A549 (cell line): ENCODE measurements at regions of chr10 and their contacts with region 1.

Region 1: GRCh38 chr10:129971381-129972144 is 7.5 kb upstream of the EBF3 start:
- DNase-seq: peak; percentile 63
- ATAC-seq: peak; percentile 89 to 93
- H3K4me3 ChIP-seq: peak overlapping the region; percentile 50
- H3K27ac ChIP-seq: peak overlapping the region in 1 of 2 experiments; percentile 68; a peak in 3 of 6 replicates
- H3K4me1 ChIP-seq: peaks cover 6% of the 10 kb centered on the region; the same call in 1 of the 3 replicates
- CTCF ChIP-seq: peak; percentile 92
- EP300 ChIP-seq: no peak
- POLR2A ChIP-seq: no peak
- RAD21 ChIP-seq: peak; percentile 58 to 94

Region 2: GRCh38 chr10:129030996-129031843 is 940.3 kb before region 1 on chr10:
- CTCF ChIA-PET with region 1: interaction called, 24 read pairs
- POLR2A ChIA-PET with region 1: no interaction called
- DNase-seq: peak; percentile 28 to 58
- ATAC-seq: peak; percentile 98 to 99
- H3K4me3 ChIP-seq: no peak overlapping the region
- H3K27ac ChIP-seq: no peak overlapping the region
- H3K4me1 ChIP-seq: no peaks in the 10 kb centered on the region
- CTCF ChIP-seq: peak; percentile 61
- EP300 ChIP-seq: no peak
- POLR2A ChIP-seq: no peak
- RAD21 ChIP-seq: peak; percentile 74 to 85

Region 3: GRCh38 chr10:129958148-129958628 is 13.4 kb before region 1 on chr10:
- CTCF ChIA-PET with region 1: interaction called, 12 read pairs
- POLR2A ChIA-PET with region 1: no interaction called
- DNase-seq: no peak
- ATAC-seq: no peak
- H3K4me3 ChIP-seq: no peak overlapping the region
- H3K27ac ChIP-seq: no peak overlapping the region
- H3K4me1 ChIP-seq: peaks cover 26% of the 10 kb centered on the region
- CTCF ChIP-seq: no peak
- EP300 ChIP-seq: no peak
- POLR2A ChIP-seq: no peak
- RAD21 ChIP-seq: no peak